ENCODE measurements at regions of chr2 and their contacts with region 1.

Region 1: DNA sequence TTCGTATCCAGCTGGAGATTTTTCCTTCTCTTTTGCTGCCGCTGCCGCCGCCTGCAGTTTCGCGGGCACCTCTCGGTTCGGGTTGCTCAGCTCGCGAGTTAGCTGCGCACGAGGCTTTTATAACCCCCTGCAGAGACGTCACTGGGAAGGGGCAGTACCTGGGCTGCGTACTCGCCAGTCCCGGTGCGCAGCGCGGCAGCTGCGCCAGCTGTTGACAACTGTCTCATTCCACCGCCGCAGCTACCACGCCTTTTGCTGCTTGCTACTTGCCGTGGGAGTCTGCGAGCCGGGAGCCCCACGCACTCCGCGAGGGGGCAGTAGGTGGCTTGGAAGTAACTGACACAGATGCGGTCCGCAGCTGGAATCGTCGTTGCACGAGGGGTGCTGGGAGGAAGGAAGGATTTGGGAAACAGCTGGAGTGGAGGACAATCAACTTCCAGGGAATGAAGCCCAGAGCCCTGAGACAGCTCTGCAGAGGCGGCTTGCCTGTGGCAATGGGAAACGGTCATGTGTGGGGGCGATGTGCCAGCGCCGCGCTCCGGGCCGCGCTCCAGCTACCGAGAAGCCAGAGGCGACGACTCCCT is at the start of gene TACR1:
- DNase-seq: peak; percentile 62 to 86
- ATAC-seq: peak; percentile 83 to 87
- H3K4me3 ChIP-seq: peak within 1 kb of the TSS; percentile 56
- H3K27ac ChIP-seq: peak within 1 kb of the TSS; percentile 4 to 59; a peak in 5 of 6 replicates
- H3K4me1 ChIP-seq: peaks cover 6% of the 10 kb centered on the region
- CTCF ChIP-seq: peak; percentile 77
- EP300 ChIP-seq: no peak
- POLR2A ChIP-seq: no peak
- RAD21 ChIP-seq: peak; percentile 84 to 90
- polyA plus RNA-seq, gene TACR1: 0.92 and 1.0 TPM in 2 replicates

Region 2: DNA sequence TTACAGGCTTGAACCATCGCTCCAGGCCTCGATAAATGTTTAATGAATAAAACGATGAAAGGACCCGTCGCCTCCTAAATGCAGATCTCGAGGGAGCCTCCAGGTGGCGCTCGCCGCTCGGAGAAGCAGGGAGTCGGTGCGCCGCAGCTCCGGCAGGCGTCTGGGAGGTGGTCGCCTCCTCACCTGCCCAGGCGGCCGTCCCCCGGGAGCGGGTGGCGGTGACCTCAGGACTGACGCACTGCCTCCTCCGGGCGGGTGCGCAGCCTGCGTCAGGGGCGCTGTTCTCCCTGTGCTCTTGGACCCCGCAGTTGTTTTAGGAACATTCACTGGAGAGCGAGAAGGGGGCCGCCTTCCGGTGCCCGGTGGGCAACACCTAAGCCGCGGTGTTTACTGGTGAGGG is 279.7 kb before region 1 on chr2:
- CTCF ChIA-PET with region 1: interaction called, 19 read pairs
- POLR2A ChIA-PET with region 1: no interaction called
- DNase-seq: peak; percentile 69 to 82
- ATAC-seq: peak; percentile 73 to 88
- H3K4me3 ChIP-seq: peak overlapping the region; percentile 53
- H3K27ac ChIP-seq: peak overlapping the region; percentile 12 to 66; a peak in 3 of 6 replicates
- H3K4me1 ChIP-seq: peaks cover 6% of the 10 kb centered on the region
- CTCF ChIP-seq: peak; percentile 98
- EP300 ChIP-seq: no peak
- POLR2A ChIP-seq: no peak
- RAD21 ChIP-seq: peak; percentile 96 to 99

Region 3: GRCh38 chr2:75146606-75147332 is 52.8 kb before region 1 on chr2:
- CTCF ChIA-PET with region 1: no interaction called
- POLR2A ChIA-PET with region 1: no interaction called
- DNase-seq: peak in 1 of 2 experiments; percentile 71
- ATAC-seq: peak; percentile 78 to 85
- H3K4me3 ChIP-seq: no peak overlapping the region
- H3K27ac ChIP-seq: peak overlapping the region; percentile 13 to 47; a peak in 4 of 6 replicates
- H3K4me1 ChIP-seq: peaks cover 16% of the 10 kb centered on the region; the same call in 2 of the 3 replicates
- CTCF ChIP-seq: no peak
- EP300 ChIP-seq: peak; percentile 52 to 68; a peak in 3 of 5 replicates
- POLR2A ChIP-seq: no peak
- RAD21 ChIP-seq: no peak

Region 4: DNA sequence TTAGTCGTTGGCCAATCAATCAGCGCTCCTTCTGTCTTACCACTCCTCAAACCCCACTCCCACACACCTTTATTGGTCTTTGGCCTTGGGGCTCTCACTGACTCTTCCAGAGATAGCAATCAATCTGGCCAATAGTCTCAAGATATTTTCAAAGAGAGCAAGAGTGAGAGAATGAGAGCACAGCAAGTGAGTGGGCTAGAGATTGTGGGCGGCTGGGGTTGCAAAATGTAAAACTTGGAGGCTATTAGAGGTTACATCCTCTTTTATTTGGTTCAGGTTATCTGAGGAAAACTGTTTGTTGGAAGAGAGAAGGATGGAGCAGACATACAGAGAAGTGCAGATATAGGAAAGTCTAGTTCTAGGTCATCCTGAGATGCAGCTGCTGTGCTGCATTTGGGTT is 33.0 kb before region 1 on chr2:
- CTCF ChIA-PET with region 1: no interaction called
- POLR2A ChIA-PET with region 1: no interaction called
- DNase-seq: no peak
- ATAC-seq: no peak
- H3K4me3 ChIP-seq: no peak overlapping the region
- H3K27ac ChIP-seq: no peak overlapping the region
- H3K4me1 ChIP-seq: no peaks in the 10 kb centered on the region
- CTCF ChIP-seq: no peak
- EP300 ChIP-seq: no peak
- POLR2A ChIP-seq: no peak
- RAD21 ChIP-seq: no peak

Region 5: GRCh38 chr2:75186821-75187220 is 12.7 kb before region 1 on chr2:
- CTCF ChIA-PET with region 1: interaction called, 22 read pairs
- POLR2A ChIA-PET with region 1: no interaction called
- DNase-seq: no peak
- ATAC-seq: no peak
- H3K4me3 ChIP-seq: no peak overlapping the region
- H3K27ac ChIP-seq: no peak overlapping the region
- H3K4me1 ChIP-seq: no peaks in the 10 kb centered on the region
- CTCF ChIP-seq: no peak
- EP300 ChIP-seq: no peak
- POLR2A ChIP-seq: no peak
- RAD21 ChIP-seq: no peak

Region 6: DNA sequence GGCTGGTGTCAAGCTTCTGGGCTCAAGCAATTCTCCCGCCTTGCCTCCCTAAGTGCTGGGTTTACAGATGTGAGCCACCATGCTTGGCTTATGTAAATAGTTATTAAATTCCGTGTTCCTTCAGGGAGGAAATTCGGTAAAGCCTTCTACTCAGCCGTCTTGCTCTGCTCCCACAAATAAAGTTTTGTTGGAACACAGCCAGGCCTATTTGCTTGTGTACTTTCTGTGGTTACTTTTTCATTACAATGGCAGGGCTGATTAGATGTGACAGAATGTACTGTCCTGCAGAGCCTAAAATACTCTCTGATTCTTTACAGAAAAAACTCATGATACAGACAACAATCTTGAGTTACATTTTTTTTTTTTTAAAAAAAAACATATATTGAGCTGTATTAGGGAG is 68.6 kb after region 1 on chr2:
- CTCF ChIA-PET with region 1: interaction called, 10 read pairs
- POLR2A ChIA-PET with region 1: no interaction called
- DNase-seq: no peak
- ATAC-seq: no peak
- H3K4me3 ChIP-seq: no peak overlapping the region
- H3K27ac ChIP-seq: no peak overlapping the region
- H3K4me1 ChIP-seq: no peaks in the 10 kb centered on the region
- CTCF ChIP-seq: no peak
- EP300 ChIP-seq: no peak
- POLR2A ChIP-seq: no peak
- RAD21 ChIP-seq: no peak

Region 7: GRCh38 chr2:75290600-75291150 is 91.2 kb after region 1 on chr2:
- CTCF ChIA-PET with region 1: interaction called, 13 read pairs
- POLR2A ChIA-PET with region 1: no interaction called
- DNase-seq: peak in 1 of 2 experiments; percentile 18
- ATAC-seq: peak; percentile 72 to 78
- H3K4me3 ChIP-seq: no peak overlapping the region
- H3K27ac ChIP-seq: no peak overlapping the region
- H3K4me1 ChIP-seq: 0 out of 3 replicates have a peak, but pooled peaks cover 9% of the 10 kb centered on the region
- CTCF ChIP-seq: peak; percentile 45
- EP300 ChIP-seq: no peak
- POLR2A ChIP-seq: no peak
- RAD21 ChIP-seq: peak; percentile 44 to 52; a peak in 3 of 5 replicates

Region 8: GRCh38 chr2:75411574-75411973 is 212.1 kb after region 1 on chr2:
- CTCF ChIA-PET with region 1: interaction called, 57 read pairs
- POLR2A ChIA-PET with region 1: no interaction called
- DNase-seq: no peak
- ATAC-seq: no peak
- H3K4me3 ChIP-seq: no peak overlapping the region
- H3K27ac ChIP-seq: no peak overlapping the region
- H3K4me1 ChIP-seq: peaks cover 4% of the 10 kb centered on the region; the same call in 2 of the 3 replicates
- CTCF ChIP-seq: no peak
- EP300 ChIP-seq: no peak
- POLR2A ChIP-seq: no peak
- RAD21 ChIP-seq: no peak

Measured in A549 (cell line).